Activated T-helper 1 cell treated with anti-CD3 and anti-CD28 coated beads, Interleukin-12 subunit alpha, Interleukin-12 subunit beta, Interleukin-2, Interleukin-4 antibody, amounts not matched to agents 30 ng/mL and 10 ng/mL and 1 ng/mL, durations not matched to agents 14 hours and 24 hours and 36 hours (primary cell): ENCODE measurements at regions of chr3 and their contacts with region 1.

Region 1: DNA sequence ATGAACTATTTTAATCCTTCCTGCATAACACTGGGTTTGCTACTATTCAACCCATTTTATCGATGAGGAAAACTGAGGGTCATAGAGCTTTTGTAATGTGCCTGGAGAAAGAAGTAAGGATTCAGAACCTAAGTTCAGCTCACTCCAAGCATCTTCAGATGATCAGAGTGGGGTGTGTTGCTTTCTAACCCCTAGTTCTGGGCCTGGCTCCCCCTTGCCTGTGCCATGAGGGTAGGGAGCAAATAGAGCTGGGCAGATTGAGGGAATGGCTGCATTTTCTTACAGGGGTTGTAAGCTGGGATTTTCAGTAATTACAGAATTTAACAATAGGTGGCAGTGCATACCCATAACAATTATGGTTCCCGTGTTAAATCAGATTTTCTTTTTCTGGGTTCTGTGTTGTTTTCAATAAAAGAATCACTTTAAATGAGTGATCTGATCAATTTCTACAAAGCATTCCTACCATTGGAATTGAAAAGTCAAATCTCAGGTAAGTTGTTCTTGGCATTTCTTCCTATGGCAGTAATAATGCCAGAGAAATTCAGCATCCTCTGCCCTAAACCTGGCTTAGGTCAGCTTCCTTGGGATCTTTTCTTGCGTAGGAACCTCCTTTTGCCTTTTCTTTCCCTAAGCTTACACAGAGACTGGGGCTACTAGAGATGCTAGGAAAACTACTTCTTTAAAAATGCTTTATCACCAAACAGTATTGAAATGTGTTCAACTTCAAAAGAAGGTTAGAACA is 103.8 kb upstream of the IL12A start:
- DNase-seq: no peak
- H3K4me3 Mint-ChIP-seq: no peak overlapping the region
- H3K27ac Mint-ChIP-seq: no peak overlapping the region
- H3K4me1 Mint-ChIP-seq: no peaks in the 10 kb centered on the region
- H3K27me3 Mint-ChIP-seq: peaks cover 4% of the 10 kb centered on the region

Region 2: DNA sequence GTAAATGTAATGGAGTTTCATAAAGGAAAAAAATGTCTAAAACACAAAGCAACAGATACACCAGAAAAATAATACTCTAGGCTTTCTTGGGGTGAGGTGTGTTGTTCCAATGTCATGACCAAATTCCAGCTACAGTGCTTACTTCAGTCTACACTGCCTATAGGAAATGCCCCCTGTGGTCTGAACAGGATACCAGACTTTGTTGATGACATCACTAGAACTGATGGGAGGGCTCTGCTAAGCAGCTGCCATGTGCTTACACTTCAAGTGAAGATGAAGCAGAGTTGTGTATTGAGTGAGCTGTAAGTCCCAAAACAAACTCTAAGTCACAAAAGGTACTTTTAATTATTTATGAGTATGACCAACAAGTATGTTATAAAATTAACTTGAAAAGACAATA is 352.3 kb before region 1 on chr3:
- intact Hi-C with region 1: no loop called
- DNase-seq: no peak
- H3K4me3 Mint-ChIP-seq: no peak overlapping the region
- H3K27ac Mint-ChIP-seq: no peak overlapping the region
- H3K4me1 Mint-ChIP-seq: no peaks in the 10 kb centered on the region
- H3K27me3 Mint-ChIP-seq: no peaks in the 10 kb centered on the region

Region 3: GRCh38 chr3:160006282-160007163 is 121.7 kb after region 1 on chr3:
- intact Hi-C with region 1: loop called (anchors 1 kb)
- DNase-seq: no peak
- H3K4me3 Mint-ChIP-seq: no peak overlapping the region
- H3K27ac Mint-ChIP-seq: no peak overlapping the region
- H3K4me1 Mint-ChIP-seq: peaks cover 42% of the 10 kb centered on the region
- H3K27me3 Mint-ChIP-seq: no peaks in the 10 kb centered on the region

Region 4: DNA sequence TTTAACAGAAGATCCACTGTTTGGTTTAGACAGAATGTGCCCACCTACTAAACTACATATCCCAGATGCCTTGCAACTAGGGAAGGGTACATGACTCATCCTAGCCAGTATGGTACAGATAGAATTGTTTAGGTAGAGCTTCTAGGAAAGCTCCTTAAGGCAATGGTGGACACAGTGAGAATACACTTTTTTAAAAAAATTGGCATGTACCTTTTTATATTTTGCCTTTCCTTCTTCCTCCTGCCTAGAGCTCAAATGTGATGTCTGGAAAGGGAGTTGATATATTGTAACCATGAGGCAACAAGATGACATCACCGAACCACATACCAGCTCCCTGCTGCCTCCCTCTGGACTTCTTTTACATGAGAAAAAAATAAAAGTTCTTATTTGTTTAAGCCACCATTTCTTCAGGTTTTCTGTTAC is 326.0 kb after region 1 on chr3:
- intact Hi-C with region 1: loop called (anchors 10 kb)
- DNase-seq: no peak
- H3K4me3 Mint-ChIP-seq: no peak overlapping the region
- H3K27ac Mint-ChIP-seq: no peak overlapping the region
- H3K4me1 Mint-ChIP-seq: no peaks in the 10 kb centered on the region
- H3K27me3 Mint-ChIP-seq: peaks cover 10% of the 10 kb centered on the region

Region 5: DNA sequence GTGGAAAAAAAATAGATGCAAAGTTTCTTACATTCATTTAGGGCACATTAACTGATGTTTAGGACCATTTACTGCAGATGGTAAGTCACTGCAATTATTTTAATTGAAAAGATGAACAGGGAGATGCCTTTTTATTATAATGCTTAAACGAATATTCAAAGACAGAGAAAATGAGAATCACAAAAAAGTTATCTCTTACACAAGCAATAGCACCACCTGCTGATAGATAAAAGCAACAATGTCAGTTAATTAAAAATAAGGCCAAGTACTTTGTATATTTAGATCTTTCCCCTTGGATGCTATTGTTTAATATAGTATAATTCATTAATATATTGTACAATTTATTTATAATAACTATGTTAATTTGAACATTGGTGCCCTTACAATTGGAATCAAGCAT is 458.3 kb after region 1 on chr3:
- intact Hi-C with region 1: loop called (anchors 1 kb)
- DNase-seq: no peak
- H3K4me3 Mint-ChIP-seq: no peak overlapping the region
- H3K27ac Mint-ChIP-seq: no peak overlapping the region
- H3K4me1 Mint-ChIP-seq: no peaks in the 10 kb centered on the region
- H3K27me3 Mint-ChIP-seq: no peaks in the 10 kb centered on the region

Region 6: GRCh38 chr3:160413613-160414248 is 528.9 kb after region 1 on chr3:
- intact Hi-C with region 1: loop called (anchors 1 kb)
- DNase-seq: peak; percentile 58
- H3K4me3 Mint-ChIP-seq: no peak overlapping the region
- H3K27ac Mint-ChIP-seq: no peak overlapping the region
- H3K4me1 Mint-ChIP-seq: peaks cover 49% of the 10 kb centered on the region
- H3K27me3 Mint-ChIP-seq: no peaks in the 10 kb centered on the region